ENCODE measurements at regions of chr3 and their contacts with region 1.

Region 1: GRCh38 chr3:157532529-157533297 is 29.5 kb upstream of the VEPH1 start:
- DNase-seq: peak; percentile 64
- H3K4me3 ChIP-seq: peak overlapping the region in 1 of 2 experiments; percentile 52; a peak in 2 of 4 replicates
- H3K27ac ChIP-seq: peak overlapping the region; percentile 68 to 83
- H3K4me1 ChIP-seq: peaks cover 2 to 28% of the 10 kb centered on the region in 2 experiments; a peak in 3 of 4 replicates
- H3K27me3 ChIP-seq: no peaks in the 10 kb centered on the region
- CTCF ChIP-seq: peak; percentile 83
- EP300 ChIP-seq: no peak
- RAD21 ChIP-seq: peak; percentile 95

Region 2: DNA sequence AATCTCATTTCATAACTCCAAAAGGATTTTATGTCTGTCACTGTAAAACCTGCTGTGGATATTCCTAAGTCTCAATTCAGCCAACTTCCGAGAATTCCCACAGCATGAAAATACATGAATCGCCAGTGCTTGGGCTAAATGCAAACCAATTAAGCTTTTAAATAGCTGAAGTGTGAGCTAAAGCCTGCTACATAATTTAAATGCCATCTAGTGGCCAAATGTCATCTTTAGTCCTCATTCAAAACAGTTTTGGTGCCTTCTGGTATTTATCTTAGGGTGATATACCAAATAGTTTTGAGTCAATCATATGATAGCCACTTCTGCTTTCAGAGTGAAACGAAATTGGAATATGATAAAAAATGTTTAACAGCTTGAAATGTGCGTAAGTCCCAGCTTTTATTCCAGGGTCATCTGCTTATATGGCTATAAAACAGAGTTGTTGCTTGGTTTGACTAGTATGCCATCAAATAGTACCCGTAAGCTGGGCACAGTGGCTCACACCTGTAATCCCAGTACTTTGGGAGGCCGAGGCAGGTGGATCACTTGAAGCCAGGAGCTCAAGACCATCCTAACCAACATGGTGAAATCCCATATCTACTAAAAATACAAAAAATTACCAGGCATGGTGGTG is 330.9 kb before region 1 on chr3:
- CTCF ChIA-PET with region 1: interaction called, 20 read pairs
- POLR2A ChIA-PET with region 1: no interaction called
- DNase-seq: peak; percentile 36
- H3K4me3 ChIP-seq: no peak overlapping the region; a peak in 1 of 4 replicates
- H3K27ac ChIP-seq: no peak overlapping the region
- H3K4me1 ChIP-seq: peaks cover 6 to 13% of the 10 kb centered on the region in 2 experiments; a peak in 3 of 4 replicates
- H3K27me3 ChIP-seq: no peaks in the 10 kb centered on the region
- CTCF ChIP-seq: peak; percentile 67
- EP300 ChIP-seq: no peak
- RAD21 ChIP-seq: peak; percentile 65

Region 3: GRCh38 chr3:157551961-157552360 is 19.2 kb after region 1 on chr3:
- CTCF ChIA-PET with region 1: interaction called, 14 read pairs
- POLR2A ChIA-PET with region 1: no interaction called
- DNase-seq: no peak
- H3K4me3 ChIP-seq: no peak overlapping the region
- H3K27ac ChIP-seq: no peak overlapping the region
- H3K4me1 ChIP-seq: no peaks in the 10 kb centered on the region
- H3K27me3 ChIP-seq: no peaks in the 10 kb centered on the region
- CTCF ChIP-seq: no peak
- EP300 ChIP-seq: no peak
- RAD21 ChIP-seq: no peak

Region 4: DNA sequence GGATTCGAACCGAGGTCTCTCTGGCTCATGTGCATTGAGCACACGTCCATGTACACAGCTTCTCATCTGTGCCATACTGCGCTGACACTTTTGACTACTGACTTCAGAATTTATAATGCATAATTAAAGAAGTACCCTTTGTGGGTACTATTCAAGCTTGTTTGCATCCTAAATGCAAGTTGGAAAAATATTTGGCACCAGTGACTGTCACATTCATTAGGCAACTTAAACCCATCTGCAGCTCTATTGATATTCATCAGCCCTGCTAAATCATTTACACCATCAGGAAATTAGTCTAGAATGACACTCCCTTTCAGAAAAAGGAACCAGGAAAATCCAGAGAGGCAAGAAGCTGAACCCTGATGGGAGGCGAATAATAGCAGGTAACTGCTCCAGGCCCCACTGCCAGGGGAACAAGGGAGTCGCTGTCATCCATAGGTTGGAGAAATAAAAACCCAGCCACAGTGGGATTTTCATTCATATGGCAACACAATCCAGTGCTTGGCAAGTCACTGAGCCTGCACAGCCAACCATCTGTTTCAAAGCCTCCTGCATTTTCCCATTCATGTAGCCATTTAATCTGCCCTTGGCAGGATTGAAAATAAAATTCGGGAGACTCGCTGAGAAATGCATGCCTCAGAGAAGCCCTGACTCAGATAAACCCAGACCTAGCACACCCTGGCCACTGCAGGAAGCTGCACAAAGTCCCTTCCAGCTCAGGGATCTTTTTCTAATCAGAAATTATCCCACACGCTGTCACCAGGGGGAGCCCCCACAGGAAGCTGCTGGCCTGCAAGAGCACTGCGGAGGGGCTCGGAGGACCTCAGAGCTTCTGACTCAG is 73.5 kb after region 1 on chr3:
- CTCF ChIA-PET with region 1: interaction called, 30 read pairs
- POLR2A ChIA-PET with region 1: no interaction called
- DNase-seq: peak; percentile 64
- H3K4me3 ChIP-seq: peak overlapping the region in 1 of 2 experiments; percentile 18; a peak in 1 of 4 replicates
- H3K27ac ChIP-seq: no peak overlapping the region
- H3K4me1 ChIP-seq: peaks cover 0 to 4% of the 10 kb centered on the region in 2 experiments; a peak in 1 of 4 replicates
- H3K27me3 ChIP-seq: no peaks in the 10 kb centered on the region
- CTCF ChIP-seq: peak; percentile 86
- EP300 ChIP-seq: no peak
- RAD21 ChIP-seq: peak; percentile 65

Region 5: GRCh38 chr3:157618886-157619285 is 86.2 kb after region 1 on chr3:
- CTCF ChIA-PET with region 1: no interaction called
- POLR2A ChIA-PET with region 1: no interaction called
- DNase-seq: no peak
- H3K4me3 ChIP-seq: no peak overlapping the region
- H3K27ac ChIP-seq: no peak overlapping the region
- H3K4me1 ChIP-seq: peaks cover 0 to 4% of the 10 kb centered on the region in 2 experiments; a peak in 2 of 4 replicates
- H3K27me3 ChIP-seq: no peaks in the 10 kb centered on the region
- CTCF ChIP-seq: no peak
- EP300 ChIP-seq: no peak
- RAD21 ChIP-seq: no peak

Region 6: GRCh38 chr3:157692468-157692867 is 159.8 kb after region 1 on chr3:
- CTCF ChIA-PET with region 1: no interaction called
- POLR2A ChIA-PET with region 1: no interaction called
- DNase-seq: no peak
- H3K4me3 ChIP-seq: no peak overlapping the region
- H3K27ac ChIP-seq: no peak overlapping the region
- H3K4me1 ChIP-seq: no peaks in the 10 kb centered on the region
- H3K27me3 ChIP-seq: no peaks in the 10 kb centered on the region
- CTCF ChIP-seq: no peak
- EP300 ChIP-seq: no peak
- RAD21 ChIP-seq: no peak

Region 7: DNA sequence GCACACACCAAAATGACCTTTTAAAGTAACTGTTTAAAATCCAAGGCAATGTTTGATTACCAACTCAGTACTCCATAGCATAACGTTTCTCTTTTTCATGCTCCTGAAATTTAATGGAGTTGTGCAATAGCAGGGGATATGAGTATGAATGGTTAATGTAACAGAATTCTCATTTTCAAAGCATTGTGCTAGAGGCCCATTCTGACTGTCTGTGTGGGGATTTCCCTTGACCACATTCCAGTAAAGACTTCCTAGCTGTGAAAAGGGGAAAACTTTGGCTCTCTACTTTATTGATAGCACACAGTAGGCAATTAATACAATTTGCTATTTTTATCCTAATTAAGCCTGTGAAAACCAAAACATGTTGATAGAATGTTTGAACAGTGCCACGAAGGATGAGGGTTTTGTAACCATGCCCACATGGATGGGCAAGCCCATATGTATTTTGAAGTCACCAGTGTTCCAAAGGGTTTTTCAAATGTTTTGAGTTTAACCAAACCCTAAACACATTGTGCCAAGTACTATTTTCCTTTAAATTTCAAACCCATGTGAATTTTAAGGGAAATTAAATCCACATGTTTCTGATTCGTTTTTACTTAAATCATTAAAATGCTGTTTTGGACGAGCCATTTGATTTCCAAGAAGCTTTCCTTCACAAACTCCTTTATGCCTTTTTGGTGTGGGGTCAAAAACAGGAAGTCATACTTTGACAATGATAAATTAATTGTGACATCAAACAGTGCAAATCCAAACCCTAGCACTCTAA is 312.3 kb after region 1 on chr3:
- CTCF ChIA-PET with region 1: no interaction called
- POLR2A ChIA-PET with region 1: no interaction called
- DNase-seq: no peak
- H3K4me3 ChIP-seq: no peak overlapping the region
- H3K27ac ChIP-seq: peak overlapping the region in 1 of 2 experiments; percentile 65; a peak in 2 of 4 replicates
- H3K4me1 ChIP-seq: no peaks in the 10 kb centered on the region; a peak in 2 of 4 replicates
- H3K27me3 ChIP-seq: no peaks in the 10 kb centered on the region
- CTCF ChIP-seq: no peak
- EP300 ChIP-seq: no peak
- RAD21 ChIP-seq: no peak

Region 8: GRCh38 chr3:158532099-158532734 is 999.5 kb after region 1 on chr3:
- CTCF ChIA-PET with region 1: interaction called, 22 read pairs
- POLR2A ChIA-PET with region 1: no interaction called
- DNase-seq: peak; percentile 36
- H3K4me3 ChIP-seq: no peak overlapping the region; a peak in 1 of 4 replicates
- H3K27ac ChIP-seq: no peak overlapping the region
- H3K4me1 ChIP-seq: peaks cover 0 to 10% of the 10 kb centered on the region in 2 experiments; a peak in 2 of 4 replicates
- H3K27me3 ChIP-seq: no peaks in the 10 kb centered on the region
- CTCF ChIP-seq: peak; percentile 83
- EP300 ChIP-seq: no peak
- RAD21 ChIP-seq: peak; percentile 95

Measured in SK-N-SH (cell line).